Aorta (tissue), 5 donors: ENCODE measurements at regions of chr5 and their contacts with region 1.

Region 1: DNA sequence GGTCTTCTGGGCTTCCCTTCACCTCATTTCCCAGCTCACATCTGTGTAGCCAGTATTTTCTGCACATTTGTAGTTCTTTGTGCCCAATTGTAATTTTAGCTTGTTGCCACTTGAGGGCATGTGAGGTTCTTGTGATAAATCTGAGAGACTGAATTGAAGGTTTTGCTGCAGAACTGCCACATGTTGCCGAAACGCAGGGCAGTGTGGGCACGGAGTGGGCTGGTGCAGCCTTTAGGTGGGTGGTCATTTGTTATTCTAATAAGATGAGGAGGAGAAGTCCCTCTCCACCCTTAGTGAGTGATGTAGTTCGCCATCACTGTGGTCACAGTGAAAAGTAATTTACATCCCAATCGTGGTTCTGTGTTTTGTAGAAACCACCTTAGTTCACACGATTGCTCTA is 21.2 kb downstream of the OTULIN start:
- DNase-seq: no peak
- ATAC-seq: peak; percentile 65
- H3K4me3 ChIP-seq: no peak overlapping the region
- H3K27ac ChIP-seq: no peak overlapping the region
- H3K4me1 ChIP-seq: peaks cover 1 to 3% of the 10 kb centered on the region in 2 donors
- H3K27me3 ChIP-seq: no peaks in the 10 kb centered on the region

Region 2: DNA sequence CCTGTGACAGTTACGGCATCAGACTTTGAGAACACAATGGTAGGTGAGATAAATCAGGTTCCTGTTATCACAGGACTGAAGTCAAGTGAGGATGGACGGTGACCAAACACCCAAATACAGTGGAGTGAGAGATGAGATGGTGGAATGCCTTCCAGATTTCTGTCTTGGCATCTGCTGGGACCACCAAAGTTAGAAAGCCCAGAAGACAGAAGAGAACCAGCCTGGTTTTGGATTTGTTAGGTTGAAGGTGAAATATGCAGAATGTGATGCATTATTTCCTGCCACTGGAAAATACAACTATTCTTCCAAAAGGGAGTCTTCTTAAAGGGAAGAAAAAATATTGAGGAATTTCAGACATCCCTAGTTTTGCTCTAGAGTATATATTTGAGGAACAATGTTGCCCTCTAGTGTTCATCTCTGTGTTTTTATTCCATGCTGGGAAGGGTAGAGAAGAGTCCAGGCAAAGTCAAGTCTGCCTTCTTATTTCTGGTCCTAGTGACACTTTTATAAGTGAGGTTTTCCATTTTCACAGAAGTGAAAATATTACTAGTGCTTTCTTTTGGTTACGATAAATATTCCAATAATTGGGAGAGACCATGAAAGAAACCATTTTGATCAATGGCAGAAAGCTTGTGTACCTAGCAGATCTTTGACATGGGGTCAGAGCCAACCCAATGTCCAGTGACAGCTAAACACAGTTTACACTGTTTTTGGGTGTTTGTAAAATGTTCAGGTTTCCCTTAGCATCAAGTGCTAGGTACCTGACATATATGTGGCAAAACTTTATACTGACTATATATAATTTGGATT is 328.1 kb after region 1 on chr5:
- intact Hi-C with region 1: loop called (anchors 5 kb)
- DNase-seq: no peak
- ATAC-seq: peak; percentile 84
- H3K4me3 ChIP-seq: no peak overlapping the region
- H3K27ac ChIP-seq: peak overlapping the region in 1 of 2 donors; percentile 25
- H3K4me1 ChIP-seq: peaks cover 0 to 6% of the 10 kb centered on the region in 2 donors
- H3K27me3 ChIP-seq: no peaks in the 10 kb centered on the region